PC-9 (cell line): ENCODE measurements at regions of chr2 and their contacts with region 1.

Region 1: GRCh38 chr2:226118471-226119430 is 680.9 kb downstream of the IRS1 start:
- DNase-seq: peak; percentile 33 to 92
- H3K4me3 ChIP-seq: peak overlapping the region; percentile 27; the same call in 1 of the 2 replicates
- H3K27ac ChIP-seq: peak overlapping the region; percentile 93
- H3K4me1 ChIP-seq: peaks cover 64% of the 10 kb centered on the region
- H3K27me3 ChIP-seq: no peaks in the 10 kb centered on the region
- CTCF ChIP-seq: no peak

Region 2: DNA sequence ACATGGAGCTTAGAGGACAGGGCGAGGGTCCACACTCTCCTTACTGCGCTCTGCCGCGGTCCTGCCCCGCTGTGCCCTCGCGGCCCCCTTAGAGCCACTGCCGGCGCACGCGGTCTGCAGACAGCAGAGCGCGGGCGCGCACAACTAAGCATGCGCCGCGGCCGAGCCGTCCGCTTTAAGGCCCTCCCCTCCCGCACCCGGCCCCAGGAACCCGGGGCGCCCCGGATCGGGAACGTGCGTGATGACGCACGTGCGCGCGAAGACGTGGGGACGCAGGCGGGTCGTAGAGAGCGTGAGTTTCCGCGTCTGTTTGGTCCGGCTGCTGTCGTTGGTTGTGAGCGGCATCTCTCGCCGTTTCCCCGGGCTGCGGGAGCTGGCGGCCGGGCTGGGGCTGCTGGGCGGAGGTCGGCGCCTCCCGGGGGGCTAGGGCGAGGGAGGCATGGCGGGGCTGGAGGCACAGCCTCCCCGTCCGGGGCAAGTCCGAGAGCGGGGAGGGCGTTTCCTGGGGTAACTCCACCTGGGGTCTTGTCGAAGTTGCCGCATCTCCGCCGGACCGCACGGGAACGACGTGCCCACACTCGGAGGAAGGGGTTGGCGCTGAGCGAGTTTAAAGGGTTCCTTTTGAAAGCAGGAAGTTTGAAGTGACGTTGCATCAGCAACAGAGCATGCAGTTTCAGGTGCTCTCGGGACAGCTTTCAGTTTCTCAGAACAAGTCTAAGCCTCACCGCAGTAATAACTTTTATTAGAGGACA is 717.2 kb after region 1 on chr2 and contains the start of gene RHBDD1:
- CTCF ChIA-PET with region 1: no interaction called
- POLR2A ChIA-PET with region 1: interaction called, 3 read pairs
- intact Hi-C with region 1: loop called (anchors 5 kb)
- DNase-seq: peak; percentile 85 to 91
- H3K4me3 ChIP-seq: peak within 1 kb of the TSS; percentile 75
- H3K27ac ChIP-seq: peak within 1 kb of the TSS; percentile 98
- H3K4me1 ChIP-seq: peaks cover 29% of the 10 kb centered on the region
- H3K27me3 ChIP-seq: no peaks in the 10 kb centered on the region
- CTCF ChIP-seq: no peak
- total RNA-seq, gene RHBDD1: 22.3 and 23.2 TPM in 2 replicates